ENCODE measurements at regions of chr2 and their contacts with region 1.

Region 1: DNA sequence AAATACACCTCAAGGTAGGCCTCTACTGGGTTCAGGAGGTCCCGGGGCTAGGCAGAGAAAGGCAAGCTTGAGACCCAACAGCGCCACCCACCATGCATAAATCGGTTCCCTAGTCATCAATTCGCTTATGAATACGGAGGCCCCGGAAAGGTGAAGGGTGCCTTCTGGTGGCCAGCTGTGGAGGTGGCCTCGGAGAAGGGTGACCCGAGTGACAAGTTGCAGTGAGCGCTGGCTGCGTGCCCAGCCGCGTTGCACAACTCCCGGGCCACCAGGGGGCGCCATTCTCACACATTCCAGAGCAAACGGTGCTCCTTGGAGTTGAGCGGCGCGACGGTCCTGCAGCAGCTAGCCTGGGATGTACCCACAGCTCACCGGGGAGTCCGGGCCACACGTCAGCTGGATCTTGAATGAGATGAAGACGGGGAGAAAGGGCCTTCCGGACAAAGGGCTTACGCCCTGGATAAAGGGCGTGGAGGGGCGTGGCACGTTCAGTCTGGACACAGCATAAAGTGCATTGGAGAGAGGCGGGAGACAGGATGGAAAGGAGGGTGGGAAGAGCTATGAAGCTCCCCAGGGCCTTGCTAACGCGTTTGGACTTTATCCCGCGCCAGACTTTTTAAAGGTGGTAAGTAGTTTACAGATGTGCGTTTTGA is 20.4 kb downstream of the TMSB10 start:
- DNase-seq: peak; percentile 97
- ATAC-seq: peak; percentile 86
- H3K4me3 Mint-ChIP-seq: peak overlapping the region; percentile 92
- H3K27ac Mint-ChIP-seq: peak overlapping the region; percentile 86
- H3K4me1 Mint-ChIP-seq: peaks cover 53% of the 10 kb centered on the region
- H3K27me3 Mint-ChIP-seq: no peaks in the 10 kb centered on the region
- CTCF ChIP-seq: peak; percentile 86

Region 2: DNA sequence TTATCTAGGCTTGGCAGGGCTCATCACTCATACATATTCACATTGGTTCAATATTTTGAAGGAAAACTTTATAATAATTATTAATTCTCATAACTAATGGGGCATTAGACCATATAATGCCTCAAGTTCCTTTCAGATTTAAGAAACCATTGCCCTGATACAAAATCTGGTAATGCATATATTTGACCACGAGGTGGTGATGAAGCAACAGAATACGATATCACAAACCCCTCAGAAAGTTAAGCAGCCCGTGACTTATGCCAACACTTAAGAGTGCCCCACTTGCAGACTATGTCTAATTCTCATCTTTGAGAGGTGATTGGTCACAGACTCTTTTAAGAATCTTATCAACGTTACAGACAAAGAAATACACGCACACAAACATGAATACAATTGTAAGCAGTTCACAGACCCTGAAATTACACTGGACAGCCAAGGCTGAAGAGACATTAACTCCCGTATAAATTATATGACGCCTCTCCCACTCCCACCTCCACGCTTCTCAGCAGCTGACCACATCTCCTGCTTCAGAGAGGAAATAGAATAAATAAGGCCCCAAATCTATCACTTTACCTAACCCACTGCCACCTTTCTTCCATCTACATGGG is 430.2 kb before region 1 on chr2:
- CTCF ChIA-PET with region 1: interaction called, 27 read pairs
- POLR2A ChIA-PET with region 1: interaction called, 3 read pairs
- intact Hi-C with region 1: loop called (anchors 1 kb)
- DNase-seq: no peak
- ATAC-seq: peak; percentile 99
- H3K4me3 Mint-ChIP-seq: no peak overlapping the region
- H3K27ac Mint-ChIP-seq: no peak overlapping the region
- H3K4me1 Mint-ChIP-seq: peaks cover 2% of the 10 kb centered on the region
- H3K27me3 Mint-ChIP-seq: no peaks in the 10 kb centered on the region
- CTCF ChIP-seq: peak; percentile 62

Region 3: GRCh38 chr2:84817239-84817655 is 108.6 kb before region 1 on chr2:
- CTCF ChIA-PET with region 1: interaction called, 5 read pairs
- POLR2A ChIA-PET with region 1: interaction called, 4 read pairs
- intact Hi-C with region 1: loop called (anchors 5 kb)
- DNase-seq: no peak
- ATAC-seq: peak; percentile 80
- H3K4me3 Mint-ChIP-seq: peak overlapping the region; percentile 29
- H3K27ac Mint-ChIP-seq: peak overlapping the region; percentile 78
- H3K4me1 Mint-ChIP-seq: peaks cover 27% of the 10 kb centered on the region
- H3K27me3 Mint-ChIP-seq: peaks cover 2% of the 10 kb centered on the region
- CTCF ChIP-seq: no peak

Region 4: GRCh38 chr2:84870306-84870705 is 55.5 kb before region 1 on chr2:
- CTCF ChIA-PET with region 1: interaction called, 17 read pairs
- POLR2A ChIA-PET with region 1: interaction called, 5 read pairs
- intact Hi-C with region 1: loop called (anchors 1 kb)
- DNase-seq: no peak
- ATAC-seq: peak; percentile 70
- H3K4me3 Mint-ChIP-seq: no peak overlapping the region
- H3K27ac Mint-ChIP-seq: no peak overlapping the region
- H3K4me1 Mint-ChIP-seq: peaks cover 3% of the 10 kb centered on the region
- H3K27me3 Mint-ChIP-seq: peaks cover 4% of the 10 kb centered on the region
- CTCF ChIP-seq: no peak

Region 5: DNA sequence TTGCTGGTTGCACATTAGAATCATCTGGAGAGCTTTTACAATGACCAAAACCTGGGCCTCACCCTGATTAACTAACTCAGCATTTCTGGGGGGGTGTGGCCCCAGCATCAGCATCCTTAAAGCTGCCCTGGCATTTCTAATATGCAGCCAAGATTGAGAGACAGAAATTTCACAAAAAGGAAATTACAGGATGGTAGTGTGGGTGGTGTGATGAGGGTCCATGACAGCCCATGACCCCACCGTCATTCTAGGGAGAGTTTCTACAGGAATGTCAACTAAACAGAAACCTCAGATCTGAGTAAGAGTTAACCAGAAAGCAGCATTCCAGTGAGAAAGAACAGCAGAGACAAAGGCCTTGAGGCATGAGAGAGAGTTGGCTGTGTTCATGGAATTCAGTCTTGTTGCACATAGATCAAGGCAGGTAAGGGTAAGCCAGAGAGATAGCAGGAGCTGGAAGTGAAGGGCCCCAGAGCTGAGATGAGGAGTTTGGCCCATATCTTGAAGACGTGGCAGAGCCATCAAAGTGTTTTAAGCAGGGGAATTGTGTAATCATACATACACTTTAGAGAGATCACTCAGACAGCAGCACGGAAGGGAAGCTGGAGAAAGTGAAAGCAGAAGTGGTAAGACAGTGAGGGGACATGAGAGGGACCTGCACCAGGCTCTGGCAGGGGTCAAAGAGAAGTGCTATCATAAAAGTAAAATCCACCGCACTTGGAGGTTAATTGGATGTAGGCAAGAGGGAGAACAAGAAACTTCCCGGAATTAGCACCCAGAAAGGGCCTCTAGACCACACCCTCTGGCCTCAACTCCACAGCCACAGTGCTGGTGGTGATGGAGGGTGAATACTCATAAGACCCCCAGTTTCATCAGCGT is 37.2 kb before region 1 on chr2:
- CTCF ChIA-PET with region 1: interaction called, 68 read pairs
- POLR2A ChIA-PET with region 1: interaction called, 33 read pairs
- intact Hi-C with region 1: loop called (anchors 1 kb)
- DNase-seq: peak; percentile 35
- ATAC-seq: peak; percentile 100
- H3K4me3 Mint-ChIP-seq: peak overlapping the region; percentile 77
- H3K27ac Mint-ChIP-seq: peak overlapping the region; percentile 96
- H3K4me1 Mint-ChIP-seq: peaks cover 29% of the 10 kb centered on the region
- H3K27me3 Mint-ChIP-seq: no peaks in the 10 kb centered on the region
- CTCF ChIP-seq: no peak

Region 6: GRCh38 chr2:84939426-84940087 is 13.7 kb after region 1 on chr2:
- CTCF ChIA-PET with region 1: interaction called, 186 read pairs
- POLR2A ChIA-PET with region 1: interaction called, 59 read pairs
- intact Hi-C with region 1: loop called (anchors 1 kb)
- DNase-seq: peak; percentile 63
- ATAC-seq: peak; percentile 88
- H3K4me3 Mint-ChIP-seq: peak overlapping the region; percentile 69
- H3K27ac Mint-ChIP-seq: peak overlapping the region; percentile 94
- H3K4me1 Mint-ChIP-seq: peaks cover 62% of the 10 kb centered on the region
- H3K27me3 Mint-ChIP-seq: no peaks in the 10 kb centered on the region
- CTCF ChIP-seq: no peak

Region 7: GRCh38 chr2:85011747-85012146 is 85.9 kb after region 1 on chr2:
- CTCF ChIA-PET with region 1: interaction called, 29 read pairs
- POLR2A ChIA-PET with region 1: interaction called, 21 read pairs
- intact Hi-C with region 1: loop called (anchors 1 kb)
- DNase-seq: no peak
- ATAC-seq: no peak
- H3K4me3 Mint-ChIP-seq: no peak overlapping the region
- H3K27ac Mint-ChIP-seq: peak overlapping the region; percentile 21
- H3K4me1 Mint-ChIP-seq: peaks cover 86% of the 10 kb centered on the region
- H3K27me3 Mint-ChIP-seq: no peaks in the 10 kb centered on the region
- CTCF ChIP-seq: no peak